ENCODE measurements at regions of chr18 and their contacts with region 1.

Region 1: GRCh38 chr18:22169007-22169864 is at the start of gene GATA6:
- DNase-seq: no peak
- H3K4me3 ChIP-seq: peak within 1 kb of the TSS; percentile 68 to 85 (median 80)
- H3K27ac ChIP-seq: peak within 1 kb of the TSS; percentile 86 to 93 (median 88)
- H3K4me1 ChIP-seq: peaks cover 9 to 80% (median 74%) of the 10 kb centered on the region in 4 donors
- H3K27me3 ChIP-seq: peaks cover 0 to 97% (median 45%) of the 10 kb centered on the region in 4 donors
- CTCF ChIP-seq: peak; percentile 55 to 61 (median 57)
- EP300 ChIP-seq: no peak
- POLR2A ChIP-seq: peak; percentile 35
- total RNA-seq, gene GATA6: 6.6 to 35.5 (median 12.5) TPM

Region 2: GRCh38 chr18:21593540-21594257 is 575.5 kb before region 1 on chr18:
- intact Hi-C with region 1: no loop called
- DNase-seq: no peak
- H3K4me3 ChIP-seq: no peak overlapping the region
- H3K27ac ChIP-seq: no peak overlapping the region
- H3K4me1 ChIP-seq: peaks cover 6 to 21% (median 11%) of the 10 kb centered on the region in 4 donors
- H3K27me3 ChIP-seq: no peaks in the 10 kb centered on the region
- CTCF ChIP-seq: no peak
- EP300 ChIP-seq: no peak
- POLR2A ChIP-seq: no peak

Region 3: DNA sequence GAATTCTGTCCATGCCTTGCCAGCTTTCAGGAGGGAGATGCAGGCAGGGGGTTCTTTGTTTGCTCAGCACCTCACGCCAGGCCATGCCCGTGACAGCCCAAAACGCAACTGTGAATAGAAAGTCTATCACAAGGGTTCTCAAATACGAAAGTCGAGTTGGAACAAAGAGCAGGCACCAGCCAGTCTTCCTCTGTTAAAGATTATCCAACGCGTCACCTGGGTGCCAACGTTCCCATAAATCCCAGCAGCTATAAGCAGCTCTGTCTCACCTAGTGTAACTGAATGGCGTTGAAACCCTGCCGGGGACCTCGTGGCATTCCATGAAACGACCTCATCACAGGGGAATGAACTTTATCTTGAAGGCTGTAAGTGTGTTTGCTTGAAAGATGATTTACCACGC is 84.7 kb before region 1 on chr18:
- intact Hi-C with region 1: no loop called
- DNase-seq: no peak
- H3K4me3 ChIP-seq: no peak overlapping the region
- H3K27ac ChIP-seq: no peak overlapping the region
- H3K4me1 ChIP-seq: no peaks in the 10 kb centered on the region
- H3K27me3 ChIP-seq: peaks cover 0 to 11% (median 0%) of the 10 kb centered on the region in 4 donors
- CTCF ChIP-seq: no peak
- EP300 ChIP-seq: no peak
- POLR2A ChIP-seq: no peak

Region 4: GRCh38 chr18:22282311-22283112 is 113.3 kb after region 1 on chr18:
- intact Hi-C with region 1: loop called (anchors 10 kb)
- DNase-seq: no peak
- H3K4me3 ChIP-seq: no peak overlapping the region
- H3K27ac ChIP-seq: peak overlapping the region in 3 of 4 donors; percentile 3 to 45 (median 8)
- H3K4me1 ChIP-seq: peaks cover 0 to 24% (median 9%) of the 10 kb centered on the region in 4 donors
- H3K27me3 ChIP-seq: no peaks in the 10 kb centered on the region
- CTCF ChIP-seq: no peak
- EP300 ChIP-seq: no peak
- POLR2A ChIP-seq: no peak

Region 5: DNA sequence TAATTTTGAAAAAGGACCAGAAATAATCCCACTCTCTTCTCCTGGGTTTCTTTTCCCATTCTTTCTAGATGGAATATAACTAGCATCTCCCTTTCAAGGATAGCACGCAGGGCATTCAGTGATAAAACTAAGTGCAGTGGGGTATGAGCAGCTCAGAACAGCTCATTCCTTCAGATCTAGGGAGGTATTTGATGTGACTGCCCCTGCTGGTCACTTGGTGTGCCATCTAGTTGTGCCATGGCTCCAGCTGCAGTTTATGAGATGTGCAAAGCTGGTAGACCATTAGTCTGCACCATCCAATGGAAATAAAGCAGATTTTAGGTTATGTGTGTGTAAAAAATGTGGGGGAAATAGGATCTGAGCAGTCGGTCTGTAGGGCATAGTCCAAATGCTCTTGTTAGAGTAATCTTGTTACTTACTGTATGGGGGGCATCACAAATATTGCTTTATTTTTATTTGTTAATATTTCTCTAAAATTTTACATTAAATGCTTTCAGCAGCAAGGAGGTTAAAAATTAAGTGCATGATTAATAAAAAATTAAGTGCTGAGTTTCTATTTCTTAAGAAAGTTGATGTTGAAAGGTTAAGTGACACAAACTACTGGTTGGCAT is 209.5 kb after region 1 on chr18:
- intact Hi-C with region 1: loop called (anchors 10 kb)
- DNase-seq: no peak
- H3K4me3 ChIP-seq: no peak overlapping the region
- H3K27ac ChIP-seq: no peak overlapping the region
- H3K4me1 ChIP-seq: no peaks in the 10 kb centered on the region
- H3K27me3 ChIP-seq: no peaks in the 10 kb centered on the region
- CTCF ChIP-seq: peak in 2 of 3 experiments; percentile 15 to 52
- EP300 ChIP-seq: no peak
- POLR2A ChIP-seq: no peak

Region 6: GRCh38 chr18:22710628-22711380 is 541.6 kb after region 1 on chr18:
- intact Hi-C with region 1: loop called (anchors 10 kb)
- DNase-seq: peak; percentile 90
- H3K4me3 ChIP-seq: peak overlapping the region; percentile 35 to 58 (median 50)
- H3K27ac ChIP-seq: peak overlapping the region; percentile 24 to 66 (median 54)
- H3K4me1 ChIP-seq: peaks cover 25 to 41% (median 37%) of the 10 kb centered on the region in 4 donors
- H3K27me3 ChIP-seq: no peaks in the 10 kb centered on the region
- CTCF ChIP-seq: no peak
- EP300 ChIP-seq: no peak
- POLR2A ChIP-seq: no peak